ENCODE measurements at regions of chr9 and their contacts with region 1.

Region 1: GRCh38 chr9:72364679-72365524 is at the start of gene ZFAND5:
- DNase-seq: peak; percentile 98
- H3K4me3 Mint-ChIP-seq: peak within 1 kb of the TSS; percentile 78
- H3K27ac Mint-ChIP-seq: peak within 1 kb of the TSS; percentile 99
- H3K4me1 Mint-ChIP-seq: peaks cover 12% of the 10 kb centered on the region
- H3K27me3 Mint-ChIP-seq: no peaks in the 10 kb centered on the region
- CTCF ChIP-seq: no peak
- total RNA-seq, gene ZFAND5: 91.7 and 107 TPM in 2 replicates

Region 2: DNA sequence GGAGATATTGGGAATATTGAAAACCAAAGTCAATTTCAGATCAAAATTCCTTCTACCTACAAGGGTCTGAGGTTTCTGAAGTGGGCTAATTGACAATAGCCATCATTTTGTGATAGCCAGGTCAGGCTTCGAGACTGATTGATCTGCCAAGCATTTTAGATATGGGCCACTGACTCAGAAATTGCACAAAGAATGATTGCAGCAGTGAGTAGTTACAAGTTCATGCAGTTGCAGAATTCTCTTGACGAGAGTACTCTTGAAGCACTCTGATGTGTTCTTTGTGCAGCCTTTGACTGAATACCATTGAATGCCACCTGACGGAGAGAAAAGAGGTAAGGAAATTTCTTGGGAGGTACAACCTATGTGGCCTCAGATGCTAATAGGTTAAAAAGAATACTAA is 312.8 kb before region 1 on chr9:
- CTCF ChIA-PET with region 1: no interaction called
- POLR2A ChIA-PET with region 1: no interaction called
- intact Hi-C with region 1: no loop called
- DNase-seq: no peak
- H3K4me3 Mint-ChIP-seq: no peak overlapping the region
- H3K27ac Mint-ChIP-seq: no peak overlapping the region
- H3K4me1 Mint-ChIP-seq: no peaks in the 10 kb centered on the region
- H3K27me3 Mint-ChIP-seq: no peaks in the 10 kb centered on the region
- CTCF ChIP-seq: no peak

Region 3: GRCh38 chr9:72280913-72281500 is 83.9 kb before region 1 on chr9:
- CTCF ChIA-PET with region 1: interaction called, 13 read pairs
- POLR2A ChIA-PET with region 1: interaction called, 5 read pairs
- intact Hi-C with region 1: no loop called
- DNase-seq: peak; percentile 73
- H3K4me3 Mint-ChIP-seq: no peak overlapping the region
- H3K27ac Mint-ChIP-seq: no peak overlapping the region
- H3K4me1 Mint-ChIP-seq: no peaks in the 10 kb centered on the region
- H3K27me3 Mint-ChIP-seq: no peaks in the 10 kb centered on the region
- CTCF ChIP-seq: peak; percentile 93

Region 4: DNA sequence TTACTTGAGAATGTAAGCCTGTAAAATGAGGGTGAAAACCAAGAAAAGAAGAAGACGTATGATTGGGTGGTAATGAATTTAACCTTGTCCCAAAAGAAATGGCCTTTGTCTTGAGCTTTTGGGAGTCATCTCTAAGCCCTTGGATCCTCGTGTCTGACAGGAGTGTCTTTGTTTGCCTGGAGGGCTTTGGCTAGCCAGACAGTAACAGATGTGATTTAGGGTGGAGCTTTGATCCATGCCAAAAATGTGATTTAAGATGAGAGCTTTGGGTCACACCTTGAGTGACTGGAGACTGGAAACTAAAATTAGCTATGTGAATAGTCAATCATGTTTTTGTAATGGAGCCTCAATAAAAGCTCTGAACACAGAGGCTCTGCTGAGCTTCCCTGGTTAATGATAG is 26.0 kb after region 1 on chr9:
- CTCF ChIA-PET with region 1: interaction called, 4 read pairs
- POLR2A ChIA-PET with region 1: interaction called, 33 read pairs
- intact Hi-C with region 1: no loop called
- DNase-seq: peak; percentile 20
- H3K4me3 Mint-ChIP-seq: no peak overlapping the region
- H3K27ac Mint-ChIP-seq: no peak overlapping the region
- H3K4me1 Mint-ChIP-seq: no peaks in the 10 kb centered on the region
- H3K27me3 Mint-ChIP-seq: no peaks in the 10 kb centered on the region
- CTCF ChIP-seq: no peak

Region 5: GRCh38 chr9:72464857-72465592 is 100.1 kb after region 1 on chr9:
- CTCF ChIA-PET with region 1: no interaction called
- POLR2A ChIA-PET with region 1: interaction called, 13 read pairs
- intact Hi-C with region 1: no loop called
- DNase-seq: no peak
- H3K4me3 Mint-ChIP-seq: no peak overlapping the region
- H3K27ac Mint-ChIP-seq: no peak overlapping the region
- H3K4me1 Mint-ChIP-seq: peaks cover 9% of the 10 kb centered on the region
- H3K27me3 Mint-ChIP-seq: no peaks in the 10 kb centered on the region
- CTCF ChIP-seq: no peak

Region 6: DNA sequence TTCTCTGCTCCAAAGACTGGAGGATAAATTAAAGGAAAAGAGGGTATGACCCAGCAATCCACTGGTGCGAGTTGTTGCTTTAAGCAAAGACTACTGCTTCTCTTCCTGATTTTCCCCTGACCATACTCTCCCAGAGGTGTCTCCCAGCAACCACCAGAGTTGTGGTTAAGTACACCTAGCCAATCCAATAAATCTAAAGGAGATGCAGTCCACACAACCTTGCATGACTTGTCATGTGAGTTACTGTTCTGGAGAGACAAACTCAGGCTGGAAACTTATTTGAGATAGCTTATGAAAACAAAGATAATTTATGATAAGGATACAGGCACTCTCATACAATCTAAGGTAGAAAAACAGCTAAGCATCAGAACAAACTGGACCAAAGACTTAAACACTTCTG is 168.4 kb after region 1 on chr9:
- CTCF ChIA-PET with region 1: interaction called, 6 read pairs
- POLR2A ChIA-PET with region 1: interaction called, 80 read pairs
- intact Hi-C with region 1: no loop called
- DNase-seq: no peak
- H3K4me3 Mint-ChIP-seq: no peak overlapping the region
- H3K27ac Mint-ChIP-seq: peak overlapping the region; percentile 40
- H3K4me1 Mint-ChIP-seq: peaks cover 5% of the 10 kb centered on the region
- H3K27me3 Mint-ChIP-seq: no peaks in the 10 kb centered on the region
- CTCF ChIP-seq: no peak

Region 7: GRCh38 chr9:72586388-72587130 is 221.7 kb after region 1 on chr9:
- CTCF ChIA-PET with region 1: interaction called, 8 read pairs
- POLR2A ChIA-PET with region 1: interaction called, 176 read pairs
- intact Hi-C with region 1: loop called (anchors 1 kb)
- DNase-seq: peak; percentile 98
- H3K4me3 Mint-ChIP-seq: no peak overlapping the region
- H3K27ac Mint-ChIP-seq: peak overlapping the region; percentile 29
- H3K4me1 Mint-ChIP-seq: peaks cover 38% of the 10 kb centered on the region
- H3K27me3 Mint-ChIP-seq: no peaks in the 10 kb centered on the region
- CTCF ChIP-seq: no peak

Measured in MCF 10A (cell line).